ENCODE measurements at regions of chr1 and their contacts with region 1.

Region 1: DNA sequence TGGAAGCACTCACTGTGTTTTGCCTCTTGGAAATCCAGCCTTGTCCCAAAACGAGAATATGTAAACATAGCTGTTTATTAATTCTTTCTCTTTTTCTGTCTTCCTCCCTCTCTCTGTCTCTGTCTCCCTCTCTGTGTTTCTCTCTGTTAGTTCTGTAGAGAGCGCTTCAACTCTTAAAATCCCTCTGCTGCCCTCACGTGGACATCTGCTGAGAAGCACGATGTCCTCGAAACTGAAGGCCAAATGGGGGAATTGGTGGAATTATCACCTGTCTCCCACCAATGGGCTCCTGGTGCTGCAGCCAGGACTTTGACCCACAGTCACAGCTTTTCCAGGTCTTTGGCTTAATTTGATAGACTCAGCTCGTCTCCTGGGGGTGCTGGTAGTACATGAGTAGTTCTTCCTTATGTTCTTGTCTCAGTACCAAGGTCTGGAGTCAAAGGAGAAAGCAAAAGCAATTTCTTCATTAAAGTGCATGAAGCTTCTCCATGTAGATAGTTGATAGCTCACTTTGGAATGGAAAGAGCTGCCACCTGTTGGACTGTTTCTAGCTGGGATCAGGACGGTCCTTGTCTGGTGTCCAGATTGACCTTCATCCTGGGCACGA is 5.5 kb upstream of the GBP6 start:
- DNase-seq: peak; percentile 75 to 85 (median 78)
- ATAC-seq: peak; percentile 71 to 93 (median 90)
- H3K4me3 ChIP-seq: no peak overlapping the region
- H3K27ac ChIP-seq: peak overlapping the region in 2 of 12 donors; percentile 33 to 49
- H3K4me1 ChIP-seq: peaks cover 0 to 26% (median 5%) of the 10 kb centered on the region in 12 donors
- H3K27me3 ChIP-seq: no peaks in the 10 kb centered on the region
- CTCF ChIP-seq: peak; percentile 62 to 91 (median 84)
- POLR2A ChIP-seq: no peak

Region 2: GRCh38 chr1:88998716-88999115 is 359.7 kb before region 1 on chr1:
- intact Hi-C with region 1: loop called (anchors 1 to 5 kb)
- DNase-seq: no peak
- ATAC-seq: peak; percentile 71 to 92 (median 88)
- H3K4me3 ChIP-seq: no peak overlapping the region
- H3K27ac ChIP-seq: no peak overlapping the region
- H3K4me1 ChIP-seq: peaks cover 0 to 4% (median 2%) of the 10 kb centered on the region in 12 donors
- H3K27me3 ChIP-seq: no peaks in the 10 kb centered on the region
- CTCF ChIP-seq: peak; percentile 47 to 72 (median 64)
- POLR2A ChIP-seq: no peak

Region 3: DNA sequence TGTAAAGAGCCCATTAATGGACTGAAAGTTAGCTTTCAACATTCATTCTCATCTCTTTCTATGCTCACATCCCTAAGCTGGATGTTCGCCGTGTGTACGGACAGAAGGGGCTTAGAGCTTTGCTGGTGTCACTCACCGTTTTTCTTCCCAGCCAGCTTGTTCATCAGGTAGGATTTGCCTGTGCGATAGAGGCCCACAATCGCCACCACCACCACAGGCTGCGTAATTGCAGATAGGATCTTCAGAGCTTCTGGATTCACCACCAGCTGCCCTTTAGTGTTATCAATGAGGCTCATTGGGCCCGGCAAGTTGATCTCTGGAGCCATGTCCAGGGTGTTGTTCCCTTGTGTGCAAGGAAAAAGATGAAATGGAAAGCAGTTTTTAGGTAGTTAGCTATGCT is 236.7 kb before region 1 on chr1:
- intact Hi-C with region 1: loop called in 1 of 10 experiments (anchors 5 kb)
- DNase-seq: no peak
- ATAC-seq: no peak
- H3K4me3 ChIP-seq: no peak overlapping the region
- H3K27ac ChIP-seq: no peak overlapping the region
- H3K4me1 ChIP-seq: peaks cover 0 to 43% (median 6%) of the 10 kb centered on the region in 12 donors
- H3K27me3 ChIP-seq: no peaks in the 10 kb centered on the region
- CTCF ChIP-seq: no peak
- POLR2A ChIP-seq: no peak

Region 4: GRCh38 chr1:89261926-89262515 is 96.4 kb before region 1 on chr1:
- intact Hi-C with region 1: loop called in 2 of 10 experiments (anchors 5 to 10 kb)
- DNase-seq: peak in 3 of 5 donors; percentile 26 to 46 (median 36)
- ATAC-seq: peak in 3 of 4 donors; percentile 24 to 60 (median 56)
- H3K4me3 ChIP-seq: peak overlapping the region in 9 of 12 donors; percentile 24 to 49 (median 33)
- H3K27ac ChIP-seq: peak overlapping the region in 9 of 12 donors; percentile 9 to 68 (median 30)
- H3K4me1 ChIP-seq: peaks cover 3 to 76% (median 30%) of the 10 kb centered on the region in 12 donors
- H3K27me3 ChIP-seq: no peaks in the 10 kb centered on the region
- CTCF ChIP-seq: no peak
- POLR2A ChIP-seq: no peak